ENCODE measurements at regions of chr1 and their contacts with region 1.

Region 1: DNA sequence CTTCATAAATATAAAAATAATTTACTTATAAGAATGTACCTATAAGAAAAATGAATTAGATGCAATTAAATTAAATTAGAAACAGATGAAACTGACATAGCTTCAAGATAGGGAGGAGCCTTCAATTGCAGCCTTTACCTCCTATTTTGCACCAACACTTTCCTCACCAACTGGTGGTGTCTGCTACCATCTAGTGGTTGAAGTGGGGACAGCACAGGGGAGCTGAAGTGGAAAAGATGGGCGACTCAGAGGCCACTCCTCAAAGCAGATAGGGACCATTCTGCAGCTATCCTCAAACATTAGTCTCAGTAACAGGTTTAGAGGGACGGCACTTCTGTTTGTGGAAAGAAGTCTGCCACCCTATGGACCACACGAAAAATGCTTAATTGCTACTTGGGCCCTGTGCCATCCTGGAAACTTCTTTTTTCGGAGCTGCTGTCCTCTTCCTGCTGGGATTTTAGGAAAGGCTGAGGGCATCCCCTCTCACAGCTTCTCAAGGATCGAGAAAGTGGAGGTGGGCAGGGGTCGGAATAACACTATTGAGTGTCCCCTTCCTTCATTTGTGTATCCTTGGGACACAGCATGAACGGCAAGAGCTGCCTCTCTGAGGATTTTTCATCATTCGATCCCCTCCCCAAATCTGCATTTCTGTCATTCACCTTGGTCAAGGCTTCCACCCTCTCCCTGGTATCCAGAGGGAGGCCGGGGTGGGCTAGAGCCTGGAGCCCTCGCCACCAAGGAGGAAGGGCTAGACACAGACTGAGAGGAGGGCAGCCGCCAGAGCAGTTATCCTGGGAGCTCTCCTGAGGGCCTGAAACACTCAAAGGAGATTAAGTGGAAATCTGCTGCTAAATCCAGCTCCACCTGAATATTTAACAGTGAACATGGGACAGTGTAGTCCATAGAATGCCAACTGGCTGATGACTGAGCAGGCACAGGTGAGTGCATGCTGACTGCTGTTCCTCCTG is 9.6 kb downstream of the PROK1 start:
- DNase-seq: peak; percentile 86
- H3K4me3 Mint-ChIP-seq: no peak overlapping the region
- H3K27ac Mint-ChIP-seq: no peak overlapping the region
- H3K4me1 Mint-ChIP-seq: peaks cover 11% of the 10 kb centered on the region
- H3K27me3 Mint-ChIP-seq: no peaks in the 10 kb centered on the region
- CTCF ChIP-seq: peak; percentile 97

Region 2: DNA sequence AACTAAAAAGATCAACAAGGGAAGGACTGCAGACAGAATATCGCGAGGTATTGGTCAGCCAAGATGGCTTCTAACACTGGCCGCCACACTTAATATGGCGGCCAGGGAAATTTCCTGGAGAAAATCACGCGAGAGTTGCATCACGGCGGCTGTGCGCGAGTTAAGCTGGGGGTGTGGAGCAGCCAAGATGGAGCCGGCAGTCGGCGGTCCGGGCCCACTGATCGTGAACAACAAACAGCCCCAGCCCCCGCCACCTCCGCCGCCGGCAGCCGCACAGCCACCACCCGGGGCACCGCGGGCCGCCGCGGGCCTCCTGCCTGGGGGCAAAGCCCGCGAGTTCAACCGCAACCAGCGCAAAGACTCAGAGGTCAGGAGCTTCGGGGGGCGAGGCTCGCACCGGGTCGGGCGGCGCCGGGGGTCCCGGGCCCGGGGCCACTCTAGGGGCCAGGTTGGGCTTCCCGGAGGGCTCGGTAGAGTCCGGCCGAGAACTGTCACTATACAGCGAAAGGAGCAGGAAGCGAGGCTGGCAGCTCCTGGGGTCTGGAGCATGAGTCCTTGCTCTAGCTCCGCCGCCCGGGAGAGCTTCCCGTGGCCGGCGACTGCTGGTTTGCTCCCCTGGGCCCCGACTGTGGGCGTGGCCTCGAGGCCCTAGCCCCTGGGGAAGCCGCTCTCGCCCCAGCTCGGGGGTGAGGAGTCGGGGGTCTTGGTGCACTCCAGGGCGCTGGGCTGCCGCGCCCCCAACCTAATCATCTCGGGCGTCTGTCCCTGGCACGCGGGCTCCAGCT is 425.9 kb before region 1 on chr1 and contains the start of gene STRIP1:
- CTCF ChIA-PET with region 1: interaction called, 4 read pairs
- POLR2A ChIA-PET with region 1: no interaction called
- intact Hi-C with region 1: loop called (anchors 1 kb)
- DNase-seq: peak; percentile 96
- H3K4me3 Mint-ChIP-seq: peak within 1 kb of the TSS; percentile 97
- H3K27ac Mint-ChIP-seq: peak within 1 kb of the TSS; percentile 94
- H3K4me1 Mint-ChIP-seq: peaks cover 18% of the 10 kb centered on the region
- H3K27me3 Mint-ChIP-seq: no peaks in the 10 kb centered on the region
- CTCF ChIP-seq: no peak
- total RNA-seq, gene STRIP1: 35.6 and 40.6 TPM in 2 replicates

Region 3: DNA sequence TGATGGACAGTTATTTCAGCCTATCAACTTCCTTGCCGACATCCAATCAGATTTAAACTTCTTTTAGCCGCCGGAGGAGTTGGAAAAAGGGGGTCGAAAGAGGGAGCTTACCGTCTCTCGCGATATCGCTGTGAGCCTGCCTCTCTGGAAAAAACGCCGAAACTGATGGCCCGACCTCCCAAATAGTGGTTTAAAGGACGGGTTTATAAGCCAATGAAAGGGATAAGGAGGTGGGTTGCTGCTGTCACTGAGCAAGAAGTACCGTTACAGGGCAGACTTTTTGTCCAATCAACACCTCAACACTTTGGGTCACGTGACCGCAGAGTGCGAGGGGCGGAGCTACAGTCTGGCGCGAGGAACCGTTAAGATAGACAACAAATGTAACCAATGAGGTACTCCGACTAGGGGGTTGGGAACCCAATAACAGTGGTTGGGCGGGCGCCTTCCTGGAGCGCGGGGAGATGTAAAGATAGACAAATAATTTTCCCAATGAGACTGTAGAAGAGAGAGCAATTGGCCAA is 121.6 kb before region 1 on chr1 and contains the start of gene RBM15:
- CTCF ChIA-PET with region 1: interaction called, 43 read pairs
- POLR2A ChIA-PET with region 1: interaction called, 5 read pairs
- intact Hi-C with region 1: no loop called
- DNase-seq: peak; percentile 100
- H3K4me3 Mint-ChIP-seq: no peak within 1 kb of the TSS
- H3K27ac Mint-ChIP-seq: no peak within 1 kb of the TSS
- H3K4me1 Mint-ChIP-seq: peaks cover 39% of the 10 kb centered on the region
- H3K27me3 Mint-ChIP-seq: no peaks in the 10 kb centered on the region
- CTCF ChIP-seq: no peak
- total RNA-seq, gene RBM15: 31.4 and 35.9 TPM in 2 replicates

Region 4: DNA sequence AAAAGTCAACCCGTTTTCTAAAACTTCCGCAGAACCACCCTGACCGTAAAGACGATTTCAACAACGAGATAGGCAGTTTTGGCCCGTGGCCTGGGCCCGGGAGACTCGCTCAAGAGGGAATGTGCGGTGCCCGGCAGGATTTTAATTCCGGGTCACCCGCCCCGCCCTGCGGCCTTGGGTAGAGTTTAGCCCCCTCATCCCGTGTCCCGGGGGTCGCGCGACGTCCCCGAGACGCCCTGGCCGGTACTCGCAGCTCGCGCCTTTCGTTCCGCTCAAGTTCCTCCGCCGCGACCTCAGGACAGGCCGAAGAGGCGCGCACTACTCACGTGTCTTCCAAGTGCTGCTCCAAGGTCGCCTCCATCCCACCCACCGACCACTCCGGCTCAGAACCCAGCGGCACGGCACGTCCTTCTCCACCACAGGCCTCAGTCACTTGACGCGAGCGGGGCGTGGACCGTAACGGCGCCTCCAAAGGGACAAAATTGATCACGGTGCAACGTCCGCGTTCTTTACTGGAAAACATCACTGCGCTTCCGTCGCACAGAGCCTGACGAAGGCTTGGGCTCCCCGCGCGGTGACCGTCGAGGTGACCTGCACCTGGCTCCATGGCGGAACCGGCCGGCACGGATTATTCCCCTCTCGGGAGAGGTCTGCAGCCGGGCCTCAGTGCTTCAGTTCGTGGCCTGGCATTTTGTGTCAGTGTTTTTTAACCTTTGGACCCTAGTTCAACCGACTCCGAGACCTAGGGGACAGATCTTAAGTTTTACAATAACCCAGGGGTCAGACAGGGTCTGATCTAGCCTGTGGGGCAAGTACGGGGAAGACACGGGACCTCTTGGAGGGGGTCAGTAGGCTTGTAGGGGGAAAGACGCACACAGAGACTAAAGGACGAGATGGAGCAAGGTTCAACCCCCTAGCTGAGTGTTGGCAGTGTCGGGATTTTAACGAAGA is 53.0 kb before region 1 on chr1 and contains the start of gene LAMTOR5:
- CTCF ChIA-PET with region 1: interaction called, 808 read pairs
- POLR2A ChIA-PET with region 1: interaction called, 40 read pairs
- intact Hi-C with region 1: loop called (anchors 1 kb)
- DNase-seq: peak; percentile 90
- H3K4me3 Mint-ChIP-seq: peak within 1 kb of the TSS; percentile 100
- H3K27ac Mint-ChIP-seq: peak within 1 kb of the TSS; percentile 100
- H3K4me1 Mint-ChIP-seq: peaks cover 9% of the 10 kb centered on the region
- H3K27me3 Mint-ChIP-seq: no peaks in the 10 kb centered on the region
- CTCF ChIP-seq: no peak
- total RNA-seq, gene LAMTOR5: 111 and 127 TPM in 2 replicates

Region 5: DNA sequence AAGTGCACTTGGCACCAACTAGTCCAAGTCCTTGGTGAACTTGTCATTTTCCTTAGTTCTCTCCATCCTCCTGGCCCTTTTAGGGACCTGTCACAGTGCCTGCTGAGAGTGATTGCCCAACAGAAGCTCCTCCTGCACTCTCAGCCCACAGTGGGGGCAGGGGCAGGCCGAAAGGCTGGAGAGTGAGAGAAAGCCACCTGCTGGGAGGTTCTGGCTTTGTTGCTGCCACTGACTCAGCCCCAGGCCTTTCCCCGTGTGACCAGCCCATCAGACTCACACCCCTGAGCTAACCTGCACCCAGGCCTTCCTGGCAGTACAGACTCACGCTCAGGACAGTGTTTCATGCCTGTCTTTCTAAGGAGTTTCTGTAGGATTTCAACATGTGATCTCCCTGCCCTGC is 26.7 kb before region 1 on chr1:
- CTCF ChIA-PET with region 1: interaction called, 77 read pairs
- POLR2A ChIA-PET with region 1: interaction called, 9 read pairs
- intact Hi-C with region 1: loop called (anchors 2 kb)
- DNase-seq: peak; percentile 86
- H3K4me3 Mint-ChIP-seq: no peak overlapping the region
- H3K27ac Mint-ChIP-seq: peak overlapping the region; percentile 80
- H3K4me1 Mint-ChIP-seq: peaks cover 15% of the 10 kb centered on the region
- H3K27me3 Mint-ChIP-seq: peaks cover 26% of the 10 kb centered on the region
- CTCF ChIP-seq: peak; percentile 30

Region 6: GRCh38 chr1:110449661-110450651 is 10.6 kb before region 1 on chr1:
- CTCF ChIA-PET with region 1: interaction called, 17 read pairs
- POLR2A ChIA-PET with region 1: interaction called, 4 read pairs
- intact Hi-C with region 1: no loop called
- DNase-seq: no peak
- H3K4me3 Mint-ChIP-seq: no peak overlapping the region
- H3K27ac Mint-ChIP-seq: no peak overlapping the region
- H3K4me1 Mint-ChIP-seq: peaks cover 4% of the 10 kb centered on the region
- H3K27me3 Mint-ChIP-seq: peaks cover 69% of the 10 kb centered on the region
- CTCF ChIP-seq: no peak

Region 7: GRCh38 chr1:110477041-110477440 is 16.5 kb after region 1 on chr1:
- CTCF ChIA-PET with region 1: interaction called, 20 read pairs
- POLR2A ChIA-PET with region 1: no interaction called
- intact Hi-C with region 1: no loop called
- DNase-seq: peak; percentile 59
- H3K4me3 Mint-ChIP-seq: no peak overlapping the region
- H3K27ac Mint-ChIP-seq: no peak overlapping the region
- H3K4me1 Mint-ChIP-seq: peaks cover 18% of the 10 kb centered on the region
- H3K27me3 Mint-ChIP-seq: peaks cover 5% of the 10 kb centered on the region
- CTCF ChIP-seq: no peak